ENCODE measurements at regions of chr13 and their contacts with region 1.

Region 1: DNA sequence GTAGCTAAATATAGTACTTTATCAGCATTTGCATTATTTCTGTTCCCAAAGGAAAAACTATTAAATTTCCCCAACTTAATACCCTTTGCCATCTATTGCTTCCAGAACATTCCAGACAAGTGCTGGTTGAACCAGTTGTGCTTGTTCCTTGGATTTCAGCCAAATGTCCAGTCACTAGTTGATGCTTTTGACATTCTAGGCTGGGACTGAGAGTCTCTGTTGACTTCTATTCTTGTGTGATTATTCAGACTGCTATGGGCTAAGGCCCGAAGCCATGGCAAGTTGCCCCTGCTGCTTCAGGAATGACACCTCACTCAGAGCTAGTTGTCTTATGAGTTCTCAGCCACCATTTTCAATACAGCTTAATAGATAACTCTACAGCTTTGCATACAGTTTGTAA is 458.0 kb upstream of the ARGLU1 start:
- DNase-seq: peak; percentile 78 to 95
- H3K4me3 ChIP-seq: no peak overlapping the region
- H3K27ac ChIP-seq: peak overlapping the region; percentile 74 to 76
- H3K4me1 ChIP-seq: peaks cover 0 to 13% of the 10 kb centered on the region in 2 donors
- H3K27me3 ChIP-seq: no peaks in the 10 kb centered on the region
- CTCF ChIP-seq: no peak

Region 2: GRCh38 chr13:107043021-107043956 is 17.3 kb after region 1 on chr13:
- intact Hi-C with region 1: loop called (anchors 2 kb)
- DNase-seq: peak in 1 of 2 donors; percentile 75
- H3K4me3 ChIP-seq: no peak overlapping the region
- H3K27ac ChIP-seq: peak overlapping the region; percentile 72 to 77
- H3K4me1 ChIP-seq: peaks cover 0 to 18% of the 10 kb centered on the region in 2 donors
- H3K27me3 ChIP-seq: no peaks in the 10 kb centered on the region
- CTCF ChIP-seq: no peak